WTC11 (cell line): ENCODE measurements at regions of chr2 and their contacts with region 1.

Region 1: DNA sequence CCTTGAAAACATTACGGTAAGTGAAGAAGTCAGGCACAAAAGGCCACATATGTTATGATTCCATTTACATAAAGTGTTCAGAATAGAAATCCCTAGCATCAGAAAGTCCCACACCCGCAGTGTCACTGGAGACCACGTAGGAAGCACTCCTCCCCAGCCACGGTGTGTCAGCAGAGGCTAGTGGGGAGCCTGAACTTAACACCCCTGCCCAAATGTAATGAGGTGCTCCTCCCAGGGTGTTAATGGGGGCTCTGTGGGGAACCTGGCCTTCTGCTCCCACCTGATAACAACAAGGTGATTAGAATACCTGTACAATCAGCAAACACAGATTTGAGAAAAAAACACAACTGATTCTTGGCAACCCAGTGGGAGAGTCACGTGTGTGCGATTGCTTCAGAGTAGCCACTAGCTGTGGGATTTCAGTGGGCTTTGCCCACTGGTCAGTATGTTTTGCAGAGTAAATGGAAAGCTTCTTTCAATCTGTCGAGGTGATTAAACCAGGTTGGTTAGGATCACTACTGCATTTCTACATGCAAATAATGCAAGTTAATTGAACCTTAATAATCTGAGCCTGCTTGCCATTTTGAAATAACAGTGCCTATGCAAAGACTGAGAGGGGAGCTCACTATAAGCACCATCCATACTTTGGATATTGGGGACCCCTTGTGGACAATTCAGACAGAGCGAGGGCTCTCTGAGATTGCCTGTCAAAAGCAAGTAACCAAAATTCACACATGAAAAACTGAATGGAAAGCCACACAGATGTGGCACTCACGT is 20.6 kb upstream of the ATRAID start:
- DNase-seq: peak; percentile 54
- ATAC-seq: peak; percentile 88
- H3K4me3 Mint-ChIP-seq: no peak overlapping the region
- H3K27ac Mint-ChIP-seq: no peak overlapping the region
- H3K4me1 Mint-ChIP-seq: no peaks in the 10 kb centered on the region
- H3K27me3 Mint-ChIP-seq: no peaks in the 10 kb centered on the region; the same call in 1 of the 2 replicates
- CTCF ChIP-seq: 0 out of 2 replicates have a peak, but pooled peaks have one; percentile 19

Region 2: DNA sequence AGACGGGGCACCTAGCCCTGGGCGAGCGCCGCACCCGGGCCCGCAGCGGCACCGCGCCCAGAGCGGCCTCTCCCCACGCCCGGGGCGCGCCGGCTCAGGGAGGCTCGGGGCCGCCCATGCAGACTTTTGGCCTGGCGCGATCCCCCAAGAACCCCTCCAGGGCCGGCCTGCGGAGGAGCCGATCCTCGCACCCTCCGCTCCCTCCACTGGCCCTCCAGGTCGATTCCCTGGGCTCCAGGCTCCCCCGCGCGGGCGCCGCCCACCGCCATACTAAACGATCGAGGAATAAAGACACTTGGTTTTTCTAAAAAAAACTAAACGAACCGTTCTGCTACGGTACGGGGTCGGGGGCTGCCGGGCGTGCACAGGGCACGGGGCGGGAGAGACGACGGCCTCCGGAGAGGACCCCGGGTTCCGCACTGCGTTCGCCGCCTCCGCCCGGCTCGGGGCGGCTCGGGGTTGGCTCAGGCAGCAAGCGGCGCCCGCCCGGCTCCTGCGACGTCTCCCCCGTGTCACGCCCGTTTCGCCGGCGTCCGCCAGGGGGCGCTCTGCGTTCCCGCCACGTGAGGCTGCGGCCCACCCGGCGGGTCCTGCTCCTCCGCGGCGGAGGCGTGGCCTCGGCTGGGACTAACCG is 105.0 kb before region 1 on chr2:
- CTCF ChIA-PET with region 1: interaction called, 19 read pairs
- POLR2A ChIA-PET with region 1: no interaction called
- DNase-seq: peak; percentile 97
- ATAC-seq: peak; percentile 81
- H3K4me3 Mint-ChIP-seq: peak overlapping the region; percentile 70
- H3K27ac Mint-ChIP-seq: no peak overlapping the region
- H3K4me1 Mint-ChIP-seq: peaks cover 21% of the 10 kb centered on the region
- H3K27me3 Mint-ChIP-seq: peaks cover 23% of the 10 kb centered on the region
- CTCF ChIP-seq: peak; percentile 98

Region 3: DNA sequence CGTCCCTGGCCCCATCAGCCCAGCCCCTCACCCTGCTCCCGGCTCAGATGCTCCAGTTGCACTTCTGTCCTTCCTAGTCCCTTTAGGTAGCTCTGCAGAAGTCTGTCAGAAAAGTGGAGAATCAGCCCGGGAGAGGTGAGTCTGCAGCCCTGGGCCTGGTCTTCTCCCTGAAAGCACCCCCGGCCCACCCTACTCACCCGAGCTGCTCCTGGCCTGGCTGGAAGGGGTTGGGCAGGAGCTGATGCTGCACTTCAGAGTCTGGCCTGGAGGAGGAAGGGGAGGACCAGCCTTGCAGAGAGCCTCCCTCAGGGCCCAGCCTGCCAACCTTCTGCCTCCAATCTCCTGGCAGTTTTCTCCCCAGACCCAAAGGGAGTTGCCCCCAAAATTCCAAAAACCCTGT is 88.9 kb before region 1 on chr2:
- CTCF ChIA-PET with region 1: interaction called, 39 read pairs
- POLR2A ChIA-PET with region 1: no interaction called
- DNase-seq: no peak
- ATAC-seq: no peak; the same call in 1 of the 2 replicates
- H3K4me3 Mint-ChIP-seq: no peak overlapping the region
- H3K27ac Mint-ChIP-seq: no peak overlapping the region
- H3K4me1 Mint-ChIP-seq: no peaks in the 10 kb centered on the region
- H3K27me3 Mint-ChIP-seq: 0 out of 2 replicates have a peak, but pooled peaks cover 5% of the 10 kb centered on the region
- CTCF ChIP-seq: no peak

Region 4: DNA sequence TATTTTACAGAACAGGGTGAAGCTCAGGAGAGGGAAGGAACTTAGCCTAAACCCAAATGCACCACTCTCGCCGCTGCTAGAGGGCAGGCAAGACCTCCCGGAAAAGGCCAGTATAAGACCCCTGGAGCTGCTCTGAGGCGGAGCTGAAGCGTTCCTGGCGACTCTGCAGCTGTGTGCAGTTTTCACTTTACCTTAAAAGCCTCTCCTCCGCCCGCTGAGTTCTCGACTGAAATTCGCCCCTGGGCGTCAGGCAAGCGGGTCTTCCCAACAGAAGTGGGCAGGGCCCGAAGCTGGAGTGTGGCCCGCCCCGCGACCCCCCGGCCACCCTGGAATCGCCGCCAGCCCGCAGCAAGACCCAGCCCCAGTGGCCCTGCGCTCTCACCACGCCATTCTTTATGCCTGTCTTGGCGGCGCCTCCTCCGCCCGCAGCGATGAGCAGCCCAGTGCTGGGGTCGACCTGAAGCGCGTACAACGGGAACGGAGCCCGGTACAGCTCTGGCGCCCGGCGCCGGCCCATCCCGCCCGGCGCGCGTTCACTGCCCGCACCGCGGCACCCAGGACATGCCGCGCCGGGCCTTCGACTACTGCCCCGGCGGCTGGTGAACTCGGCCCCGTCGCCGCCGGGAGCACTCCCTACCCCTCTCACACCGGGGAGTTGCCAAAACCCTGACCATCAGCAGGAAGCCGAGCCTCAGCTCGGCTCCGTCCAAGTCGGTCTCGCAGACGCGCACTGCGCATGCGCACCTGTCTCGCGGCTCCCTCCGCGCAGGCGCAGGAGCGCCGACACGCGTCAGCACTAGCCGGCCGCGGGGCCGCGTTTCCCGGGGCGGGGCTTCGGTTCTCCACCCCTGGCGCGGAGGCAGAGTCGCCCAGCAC is 57.1 kb before region 1 on chr2 and contains the start of gene PREB:
- CTCF ChIA-PET with region 1: interaction called, 50 read pairs
- POLR2A ChIA-PET with region 1: interaction called, 5 read pairs
- DNase-seq: peak; percentile 99
- ATAC-seq: peak; percentile 93
- H3K4me3 Mint-ChIP-seq: peak within 1 kb of the TSS; percentile 90
- H3K27ac Mint-ChIP-seq: peak within 1 kb of the TSS; percentile 98
- H3K4me1 Mint-ChIP-seq: peaks cover 14% of the 10 kb centered on the region
- H3K27me3 Mint-ChIP-seq: peaks cover 5% of the 10 kb centered on the region
- CTCF ChIP-seq: no peak
- total RNA-seq, gene PREB: 56.7 to 69.2 TPM (median 56.7 TPM) in 3 replicates

Region 5: GRCh38 chr2:27159271-27159670 is 32.0 kb before region 1 on chr2:
- CTCF ChIA-PET with region 1: interaction called, 16 read pairs
- POLR2A ChIA-PET with region 1: no interaction called
- DNase-seq: no peak
- ATAC-seq: no peak
- H3K4me3 Mint-ChIP-seq: no peak overlapping the region
- H3K27ac Mint-ChIP-seq: no peak overlapping the region
- H3K4me1 Mint-ChIP-seq: peaks cover 3% of the 10 kb centered on the region
- H3K27me3 Mint-ChIP-seq: no peaks in the 10 kb centered on the region
- CTCF ChIP-seq: no peak

Region 6: DNA sequence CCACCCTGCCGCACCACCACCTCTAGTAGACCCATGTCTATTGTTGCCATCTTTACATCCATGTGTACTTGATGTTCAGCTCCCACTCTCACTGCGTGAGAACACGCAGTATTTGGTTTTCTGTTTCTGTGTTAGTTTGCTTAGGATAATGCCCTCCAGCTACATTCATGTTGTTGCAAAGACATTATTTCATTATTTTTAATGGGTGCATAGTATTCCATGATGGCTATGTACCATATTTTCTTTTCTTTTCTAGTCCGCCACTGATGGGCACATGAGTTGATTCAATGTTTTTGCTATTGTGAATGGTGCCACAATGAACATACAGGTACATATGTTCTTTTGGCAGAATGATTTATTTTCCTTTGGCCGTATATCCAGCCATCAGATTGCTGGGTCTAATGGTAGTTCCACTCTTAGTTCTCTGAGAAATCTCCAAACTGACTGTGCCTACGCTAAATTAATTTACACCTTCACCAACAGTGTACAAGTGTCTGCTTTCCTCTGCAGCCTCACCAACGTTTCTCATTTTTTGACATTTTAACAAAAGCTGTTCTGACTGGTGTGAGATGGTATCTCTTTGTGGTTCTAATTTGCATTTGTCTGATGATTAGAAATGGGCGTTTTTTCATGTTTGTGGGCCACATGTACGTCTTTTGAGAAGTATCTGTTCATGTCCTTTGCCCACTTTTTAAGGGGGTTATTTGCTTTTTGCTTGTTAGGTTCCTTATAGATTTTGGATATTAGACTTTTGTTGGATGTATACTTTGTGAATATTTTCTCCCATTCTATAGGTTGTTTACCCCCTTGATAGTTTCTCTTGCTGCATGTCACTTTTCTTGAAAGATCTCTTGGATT is 199.8 kb after region 1 on chr2:
- CTCF ChIA-PET with region 1: no interaction called
- POLR2A ChIA-PET with region 1: no interaction called
- DNase-seq: no peak
- ATAC-seq: no peak
- H3K4me3 Mint-ChIP-seq: no peak overlapping the region
- H3K27ac Mint-ChIP-seq: no peak overlapping the region; the same call in 1 of the 2 replicates
- H3K4me1 Mint-ChIP-seq: no peaks in the 10 kb centered on the region
- H3K27me3 Mint-ChIP-seq: no peaks in the 10 kb centered on the region
- CTCF ChIP-seq: no peak